ENCODE measurements at regions of chr2 and their contacts with region 1.

Region 1: GRCh38 chr2:134245340-134245984 is 8.4 kb upstream of the MGAT5 start:
- DNase-seq: peak; percentile 46 to 63
- H3K4me3 ChIP-seq: no peak overlapping the region
- H3K27ac ChIP-seq: no peak overlapping the region
- H3K4me1 ChIP-seq: no peaks in the 10 kb centered on the region
- H3K27me3 ChIP-seq: no peaks in the 10 kb centered on the region
- CTCF ChIP-seq: peak; percentile 89

Region 2: DNA sequence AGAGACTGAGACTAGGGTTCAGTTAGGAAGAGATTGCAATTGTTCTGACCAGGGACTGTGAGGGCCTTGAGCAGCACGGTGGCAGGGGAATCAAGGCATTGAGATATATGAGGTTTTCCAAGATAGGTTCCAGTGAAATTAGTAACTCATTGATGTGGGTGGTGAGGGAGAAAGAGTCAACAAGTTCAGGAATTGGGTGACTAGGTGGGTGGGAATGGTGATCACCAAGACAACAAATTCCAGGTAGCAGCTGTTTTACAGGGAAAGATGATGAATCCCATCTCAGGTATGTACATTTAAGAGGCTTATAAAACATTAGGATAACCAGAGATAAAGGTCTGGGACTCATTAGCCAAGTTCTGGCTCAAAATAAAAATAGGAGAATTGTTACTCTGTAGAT is 243.1 kb before region 1 on chr2:
- CTCF ChIA-PET with region 1: no interaction called
- POLR2A ChIA-PET with region 1: no interaction called
- intact Hi-C with region 1: no loop called
- DNase-seq: no peak
- H3K4me3 ChIP-seq: no peak overlapping the region
- H3K27ac ChIP-seq: no peak overlapping the region
- H3K4me1 ChIP-seq: no peaks in the 10 kb centered on the region
- H3K27me3 ChIP-seq: peaks cover 36% of the 10 kb centered on the region
- CTCF ChIP-seq: no peak

Region 3: DNA sequence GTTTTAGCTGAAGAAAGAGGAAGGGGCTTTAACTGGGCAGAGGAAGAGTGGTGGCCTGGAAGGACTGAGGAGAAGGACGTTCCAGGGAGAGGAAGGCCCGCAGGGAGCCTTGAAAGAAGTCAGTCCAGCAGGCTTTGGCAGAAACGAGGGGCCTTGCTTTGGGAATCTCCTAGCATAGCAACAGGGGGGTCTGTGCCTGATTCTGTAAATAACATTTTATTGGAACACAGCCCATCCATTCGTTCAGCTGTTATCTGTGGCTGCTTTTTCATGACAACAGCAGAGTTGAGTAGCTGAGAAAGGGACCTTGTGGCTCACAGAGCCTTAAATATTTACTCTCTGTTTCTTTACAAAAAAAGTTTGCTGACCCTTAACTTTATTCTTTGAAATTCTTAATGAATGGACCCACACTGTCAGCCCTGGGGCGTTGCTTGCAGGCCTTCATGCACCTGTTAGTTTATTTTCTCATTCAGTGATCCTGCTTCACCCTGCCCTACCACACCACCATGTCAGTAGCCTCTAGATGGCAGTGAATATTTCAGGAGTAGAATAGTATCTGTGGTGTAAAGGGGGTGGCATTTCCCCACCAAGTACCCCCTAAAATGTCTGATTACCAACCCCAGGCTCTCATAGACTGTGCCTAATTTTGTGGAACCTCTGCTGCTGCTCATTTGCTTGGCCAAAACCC is 69.4 kb after region 1 on chr2:
- CTCF ChIA-PET with region 1: no interaction called
- POLR2A ChIA-PET with region 1: interaction called, 17 read pairs
- intact Hi-C with region 1: no loop called
- DNase-seq: no peak
- H3K4me3 ChIP-seq: no peak overlapping the region
- H3K27ac ChIP-seq: no peak overlapping the region
- H3K4me1 ChIP-seq: no peaks in the 10 kb centered on the region
- H3K27me3 ChIP-seq: no peaks in the 10 kb centered on the region
- CTCF ChIP-seq: no peak

Region 4: GRCh38 chr2:134411828-134412638 is 166.6 kb after region 1 on chr2:
- CTCF ChIA-PET with region 1: no interaction called
- POLR2A ChIA-PET with region 1: interaction called, 6 read pairs
- intact Hi-C with region 1: loop called (anchors 5 kb)
- DNase-seq: peak; percentile 36 to 57
- H3K4me3 ChIP-seq: no peak overlapping the region
- H3K27ac ChIP-seq: no peak overlapping the region
- H3K4me1 ChIP-seq: peaks cover 2% of the 10 kb centered on the region
- H3K27me3 ChIP-seq: no peaks in the 10 kb centered on the region
- CTCF ChIP-seq: peak; percentile 70

Region 5: GRCh38 chr2:134452042-134452733 is 206.7 kb after region 1 on chr2:
- CTCF ChIA-PET with region 1: no interaction called
- POLR2A ChIA-PET with region 1: no interaction called
- intact Hi-C with region 1: loop called (anchors 1 kb)
- DNase-seq: no peak
- H3K4me3 ChIP-seq: no peak overlapping the region
- H3K27ac ChIP-seq: no peak overlapping the region
- H3K4me1 ChIP-seq: no peaks in the 10 kb centered on the region
- H3K27me3 ChIP-seq: no peaks in the 10 kb centered on the region
- CTCF ChIP-seq: no peak

Measured in PC-9 (cell line).